Sigmoid colon (tissue), 7 donors: ENCODE measurements at regions of chr3 and their contacts with region 1.

Region 1: GRCh38 chr3:151838583-151839312 is 24.8 kb downstream of the AADAC start:
- DNase-seq: peak; percentile 66
- H3K4me3 ChIP-seq: peak overlapping the region in 1 of 4 donors; percentile 13
- H3K27ac ChIP-seq: no peak overlapping the region
- H3K4me1 ChIP-seq: peaks cover 0 to 17% (median 12%) of the 10 kb centered on the region in 4 donors
- H3K27me3 ChIP-seq: no peaks in the 10 kb centered on the region
- CTCF ChIP-seq: peak; percentile 21 to 84 (median 76)
- EP300 ChIP-seq: no peak
- POLR2A ChIP-seq: no peak

Region 2: GRCh38 chr3:151227807-151228665 is 610.7 kb before region 1 on chr3:
- intact Hi-C with region 1: loop called (anchors 10 kb)
- DNase-seq: peak; percentile 84
- H3K4me3 ChIP-seq: no peak overlapping the region
- H3K27ac ChIP-seq: peak overlapping the region; percentile 29 to 62 (median 52)
- H3K4me1 ChIP-seq: peaks cover 0 to 32% (median 18%) of the 10 kb centered on the region in 4 donors
- H3K27me3 ChIP-seq: no peaks in the 10 kb centered on the region
- CTCF ChIP-seq: peak; percentile 79 to 96 (median 84)
- EP300 ChIP-seq: no peak
- POLR2A ChIP-seq: no peak

Region 3: DNA sequence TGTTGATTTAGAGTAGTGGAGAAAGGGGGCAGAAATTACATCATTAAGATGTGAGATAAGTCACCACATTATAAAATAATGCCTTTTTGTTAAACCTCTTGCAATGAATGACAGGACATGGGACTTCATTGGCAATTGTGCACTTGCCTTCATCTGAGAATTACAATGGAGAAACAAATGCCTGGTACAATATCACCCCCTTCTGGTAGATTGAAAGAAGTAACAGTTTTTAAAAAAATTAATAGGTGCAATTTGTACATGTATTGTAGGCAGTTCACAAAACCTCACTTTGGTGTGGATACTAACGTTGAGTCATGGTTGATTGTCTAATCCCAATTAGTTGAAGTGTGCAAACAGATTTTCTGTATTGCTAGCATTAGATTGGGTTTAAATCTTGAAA is 555.8 kb before region 1 on chr3:
- intact Hi-C with region 1: loop called (anchors 10 kb)
- DNase-seq: no peak
- H3K4me3 ChIP-seq: no peak overlapping the region
- H3K27ac ChIP-seq: peak overlapping the region in 2 of 4 donors; percentile 40 to 65
- H3K4me1 ChIP-seq: peaks cover 0 to 40% (median 15%) of the 10 kb centered on the region in 4 donors
- H3K27me3 ChIP-seq: no peaks in the 10 kb centered on the region
- CTCF ChIP-seq: peak; percentile 48 to 70 (median 58)
- EP300 ChIP-seq: no peak
- POLR2A ChIP-seq: no peak

Region 4: GRCh38 chr3:151439652-151440129 is 399.1 kb before region 1 on chr3:
- intact Hi-C with region 1: loop called (anchors 1 kb)
- DNase-seq: no peak
- H3K4me3 ChIP-seq: no peak overlapping the region
- H3K27ac ChIP-seq: no peak overlapping the region
- H3K4me1 ChIP-seq: no peaks in the 10 kb centered on the region
- H3K27me3 ChIP-seq: no peaks in the 10 kb centered on the region
- CTCF ChIP-seq: peak; percentile 75 to 81 (median 80)
- EP300 ChIP-seq: no peak
- POLR2A ChIP-seq: no peak

Region 5: GRCh38 chr3:151875759-151876158 is 37.0 kb after region 1 on chr3:
- intact Hi-C with region 1: no loop called
- DNase-seq: no peak
- H3K4me3 ChIP-seq: no peak overlapping the region
- H3K27ac ChIP-seq: peak overlapping the region in 1 of 4 donors; percentile 23
- H3K4me1 ChIP-seq: peaks cover 0 to 45% (median 18%) of the 10 kb centered on the region in 4 donors
- H3K27me3 ChIP-seq: no peaks in the 10 kb centered on the region
- CTCF ChIP-seq: no peak
- EP300 ChIP-seq: no peak
- POLR2A ChIP-seq: no peak

Region 6: DNA sequence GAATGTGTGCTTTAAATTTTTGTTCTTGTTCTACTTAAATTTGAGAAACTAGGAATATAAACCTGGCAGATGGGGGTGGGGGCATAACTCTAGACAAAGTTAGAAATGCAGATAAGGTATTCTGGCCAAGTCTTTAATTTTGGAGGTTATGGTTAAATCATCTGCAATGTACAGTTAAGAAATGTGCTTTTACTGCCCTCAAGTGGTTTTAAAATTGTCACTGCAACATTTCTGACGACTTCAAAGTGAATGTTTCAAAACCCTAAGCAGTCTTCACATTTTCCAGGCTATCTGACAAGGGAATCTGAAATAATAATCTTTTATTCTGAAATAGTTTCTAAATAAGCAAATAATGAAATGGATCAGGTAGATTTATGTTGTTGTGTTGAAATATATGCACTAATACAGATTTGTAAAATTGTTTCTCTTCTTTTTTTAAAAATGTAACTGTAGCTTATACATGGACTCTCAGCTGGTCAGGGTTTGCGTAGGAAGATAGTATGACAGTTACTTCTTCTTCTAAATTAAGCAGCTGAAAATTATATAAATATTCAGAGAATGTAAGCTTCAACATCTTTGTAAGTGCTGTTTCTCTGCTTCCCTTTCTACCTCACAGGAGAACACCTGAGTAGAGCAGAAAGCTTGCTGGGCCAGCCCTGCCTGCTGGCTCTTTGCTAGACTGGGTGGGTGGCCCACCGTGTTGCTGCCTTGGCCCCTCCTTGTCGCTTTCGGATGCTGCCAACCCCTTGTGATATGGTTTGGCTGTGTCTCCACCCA is 79.7 kb after region 1 on chr3:
- intact Hi-C with region 1: loop called (anchors 5 kb)
- DNase-seq: no peak
- H3K4me3 ChIP-seq: no peak overlapping the region
- H3K27ac ChIP-seq: no peak overlapping the region
- H3K4me1 ChIP-seq: peaks cover 0 to 10% (median 2%) of the 10 kb centered on the region in 4 donors
- H3K27me3 ChIP-seq: no peaks in the 10 kb centered on the region
- CTCF ChIP-seq: peak in 3 of 4 experiments; percentile 35 to 62 (median 53)
- EP300 ChIP-seq: no peak
- POLR2A ChIP-seq: no peak